Testis (tissue), 5 donors: ENCODE measurements at regions of chr2 and their contacts with region 1.

Region 1: GRCh38 chr2:170815746-170816503 is 762 bp upstream of the GAD1 start:
- DNase-seq: peak; percentile 81
- H3K4me3 ChIP-seq: peak overlapping the region; percentile 13 to 67
- H3K27ac ChIP-seq: no peak overlapping the region
- H3K4me1 ChIP-seq: peaks cover 40% of the 10 kb centered on the region
- H3K27me3 ChIP-seq: no peaks in the 10 kb centered on the region
- CTCF ChIP-seq: peak; percentile 54 to 77 (median 76)
- POLR2A ChIP-seq: no peak

Region 2: GRCh38 chr2:170369894-170370293 is 446.0 kb before region 1 on chr2:
- intact Hi-C with region 1: loop called (anchors 10 kb)
- DNase-seq: no peak
- H3K4me3 ChIP-seq: no peak overlapping the region
- H3K27ac ChIP-seq: no peak overlapping the region
- H3K4me1 ChIP-seq: no peaks in the 10 kb centered on the region
- H3K27me3 ChIP-seq: no peaks in the 10 kb centered on the region
- CTCF ChIP-seq: no peak
- POLR2A ChIP-seq: no peak

Region 3: DNA sequence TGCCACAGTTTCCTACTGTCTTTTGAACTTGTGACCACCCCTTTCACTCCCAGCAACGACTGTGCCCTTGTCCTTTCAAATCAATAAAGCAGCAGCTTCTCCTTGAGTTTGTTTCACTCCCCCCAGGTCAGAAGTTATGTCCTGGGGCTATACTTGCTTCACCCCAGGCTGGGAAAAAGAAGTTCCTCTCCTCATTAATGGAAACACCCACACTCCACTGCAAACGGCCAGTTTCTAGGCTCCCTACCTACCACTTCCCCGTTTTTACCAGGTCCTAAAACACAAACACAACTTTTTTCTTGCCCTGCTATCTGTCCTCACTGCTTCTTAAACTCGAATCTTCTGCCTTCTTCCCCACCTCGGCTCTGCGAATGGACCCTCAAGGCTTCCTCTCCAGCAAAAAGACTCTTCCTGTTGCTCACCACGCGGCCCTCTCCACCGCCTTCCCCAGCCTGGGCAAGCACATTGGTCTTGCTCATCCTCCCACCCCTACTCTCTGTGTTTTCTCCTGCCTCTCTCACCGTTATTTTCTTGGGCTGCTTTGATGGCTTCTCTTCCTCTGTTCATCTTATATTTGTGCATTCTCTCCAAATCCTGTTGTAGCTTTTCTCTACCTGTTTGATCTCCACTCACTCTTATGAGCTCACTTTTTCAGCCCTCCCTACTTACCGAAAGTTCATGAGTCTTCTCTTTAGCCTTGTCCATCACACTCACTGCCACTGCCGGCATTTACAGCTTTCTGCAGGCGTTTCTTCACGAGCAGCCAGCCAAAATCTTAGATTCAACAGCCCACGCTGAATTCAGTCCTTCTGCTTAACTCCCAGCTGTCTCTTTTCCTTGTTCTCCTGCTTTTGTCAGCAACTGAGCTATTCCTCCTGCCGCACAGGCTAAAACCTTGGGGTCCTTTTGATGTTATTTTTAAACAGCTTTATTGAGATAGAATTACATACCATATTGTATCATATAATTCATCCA is 107.8 kb before region 1 on chr2:
- intact Hi-C with region 1: no loop called
- DNase-seq: no peak
- H3K4me3 ChIP-seq: no peak overlapping the region
- H3K27ac ChIP-seq: no peak overlapping the region
- H3K4me1 ChIP-seq: no peaks in the 10 kb centered on the region
- H3K27me3 ChIP-seq: no peaks in the 10 kb centered on the region
- CTCF ChIP-seq: no peak
- POLR2A ChIP-seq: no peak

Region 4: DNA sequence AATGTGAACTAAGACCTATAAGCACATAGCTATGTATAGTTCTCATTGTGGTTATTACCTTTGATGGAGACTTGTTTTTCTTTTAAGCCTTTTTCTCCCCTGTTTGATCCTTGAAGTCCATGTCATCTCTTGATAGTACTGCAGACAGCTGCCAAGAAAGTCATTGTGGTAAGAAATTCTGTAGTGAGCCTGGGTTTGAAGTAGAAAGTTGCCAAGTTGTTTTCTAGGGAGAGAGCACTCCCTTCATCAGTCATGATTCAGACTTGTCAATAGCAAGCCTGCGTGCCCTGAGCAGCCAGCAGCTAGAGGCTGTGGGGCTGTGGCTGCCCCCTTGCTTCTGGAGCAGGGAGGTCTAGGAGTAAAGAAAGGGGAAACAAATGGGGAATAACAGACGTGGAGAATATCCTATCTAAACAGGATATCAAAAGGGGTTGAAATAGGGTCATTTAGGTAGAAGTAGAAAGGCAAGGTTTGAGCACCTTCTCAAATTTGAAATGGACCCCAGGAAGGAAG is 92.4 kb before region 1 on chr2:
- intact Hi-C with region 1: no loop called
- DNase-seq: no peak
- H3K4me3 ChIP-seq: no peak overlapping the region
- H3K27ac ChIP-seq: no peak overlapping the region
- H3K4me1 ChIP-seq: no peaks in the 10 kb centered on the region
- H3K27me3 ChIP-seq: no peaks in the 10 kb centered on the region
- CTCF ChIP-seq: no peak
- POLR2A ChIP-seq: no peak